Calu3 (cell line): ENCODE measurements at regions of chr15 and their contacts with region 1.

Region 1: GRCh38 chr15:69576035-69576526 is 123.5 kb downstream of the RPLP1 start:
- DNase-seq: peak; percentile 88
- H3K4me3 Mint-ChIP-seq: no peak overlapping the region
- H3K27ac Mint-ChIP-seq: no peak overlapping the region
- H3K4me1 Mint-ChIP-seq: peaks cover 31% of the 10 kb centered on the region
- H3K27me3 Mint-ChIP-seq: peaks cover 71% of the 10 kb centered on the region
- CTCF ChIP-seq: peak; percentile 89

Region 2: DNA sequence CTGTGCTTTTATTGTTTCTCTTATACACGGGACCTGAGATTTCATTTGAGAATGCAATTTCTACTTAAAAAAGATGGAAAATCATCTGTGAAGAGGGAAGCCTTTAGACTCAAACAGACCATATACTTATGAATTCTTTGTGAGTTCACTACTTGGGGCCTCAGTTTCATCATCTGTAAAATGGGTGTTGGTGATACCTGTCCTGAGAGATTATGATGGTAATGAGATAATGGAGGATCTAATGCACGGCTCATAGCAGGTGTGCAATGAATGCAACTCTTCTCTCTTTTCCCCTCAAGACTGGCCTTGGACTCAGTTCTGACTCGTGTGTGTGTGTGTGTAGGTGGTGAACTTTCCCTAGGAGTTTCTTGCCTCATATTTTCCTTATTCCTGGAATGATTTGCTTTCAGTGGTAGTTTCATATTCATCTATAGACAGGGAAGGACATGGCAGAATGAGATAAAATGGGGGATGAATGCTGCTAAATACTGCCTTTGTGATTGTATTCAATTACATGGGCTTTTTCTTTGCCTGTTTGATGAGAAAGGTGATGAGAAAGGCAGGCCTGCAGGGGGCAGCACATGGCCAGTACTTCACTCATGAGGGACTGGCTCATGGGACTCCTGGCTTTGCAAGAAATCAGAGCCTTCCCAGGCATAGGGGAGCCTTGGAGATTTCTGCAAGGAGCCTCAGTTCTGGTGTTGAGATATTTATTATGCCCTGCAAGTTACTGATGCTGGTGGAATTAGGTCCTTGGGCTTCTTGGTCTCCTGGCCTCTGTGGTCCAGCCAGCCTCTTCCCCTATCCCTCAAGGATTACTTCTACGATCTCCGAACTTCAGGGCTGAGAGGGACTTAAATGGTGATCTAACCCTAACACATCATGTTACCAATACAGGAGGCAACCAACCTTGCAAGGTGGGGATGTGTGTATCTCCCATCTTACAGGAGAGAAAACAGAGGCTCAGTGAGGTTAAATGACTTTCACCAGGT is 52.8 kb before region 1 on chr15:
- CTCF ChIA-PET with region 1: interaction called, 5 read pairs
- intact Hi-C with region 1: loop called (anchors 5 kb)
- DNase-seq: peak; percentile 87
- H3K4me3 Mint-ChIP-seq: no peak overlapping the region
- H3K27ac Mint-ChIP-seq: no peak overlapping the region
- H3K4me1 Mint-ChIP-seq: peaks cover 26% of the 10 kb centered on the region
- H3K27me3 Mint-ChIP-seq: no peaks in the 10 kb centered on the region
- CTCF ChIP-seq: peak; percentile 61

Region 3: DNA sequence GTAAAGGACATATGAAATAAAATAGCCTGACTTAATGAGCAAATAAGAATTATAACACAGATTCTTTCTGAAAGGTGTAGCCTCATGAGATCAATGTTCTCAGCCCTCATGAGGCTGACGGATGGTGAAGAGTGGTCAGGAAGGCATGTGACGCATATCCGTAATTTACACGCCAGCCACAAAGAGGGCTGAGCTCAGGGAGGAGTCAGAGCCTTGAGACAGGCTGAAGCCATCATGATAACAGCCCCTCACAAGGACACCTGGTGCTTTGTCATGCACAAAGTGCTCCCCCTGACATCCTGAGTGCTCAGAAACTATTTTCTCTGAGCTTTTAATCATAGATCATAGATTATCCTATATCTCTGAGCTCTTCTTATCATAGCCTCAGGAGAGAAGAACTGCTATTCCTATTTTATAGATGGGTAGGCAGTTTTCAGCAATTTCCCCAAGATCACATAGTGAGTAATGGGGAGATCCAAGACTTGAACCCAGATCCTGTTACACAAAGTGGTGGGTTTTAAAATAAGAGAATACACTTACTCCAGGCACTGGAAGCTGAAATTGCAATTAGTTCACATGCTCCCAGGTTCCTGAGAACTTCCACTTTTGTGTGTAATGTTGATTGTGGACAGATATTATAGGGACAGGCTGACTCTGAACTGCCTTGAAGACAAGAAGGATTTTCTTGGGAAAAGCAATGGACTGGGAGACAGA is 143.6 kb after region 1 on chr15:
- CTCF ChIA-PET with region 1: interaction called, 3 read pairs
- intact Hi-C with region 1: loop called (anchors 5 kb)
- DNase-seq: no peak
- H3K4me3 Mint-ChIP-seq: no peak overlapping the region
- H3K27ac Mint-ChIP-seq: no peak overlapping the region
- H3K4me1 Mint-ChIP-seq: peaks cover 24% of the 10 kb centered on the region
- H3K27me3 Mint-ChIP-seq: peaks cover 30% of the 10 kb centered on the region
- CTCF ChIP-seq: no peak

Region 4: GRCh38 chr15:70362886-70363285 is 786.8 kb after region 1 on chr15:
- CTCF ChIA-PET with region 1: no interaction called
- intact Hi-C with region 1: loop called (anchors 10 kb)
- DNase-seq: peak; percentile 71
- H3K4me3 Mint-ChIP-seq: no peak overlapping the region
- H3K27ac Mint-ChIP-seq: no peak overlapping the region
- H3K4me1 Mint-ChIP-seq: no peaks in the 10 kb centered on the region
- H3K27me3 Mint-ChIP-seq: peaks cover 39% of the 10 kb centered on the region
- CTCF ChIP-seq: peak; percentile 67